Endothelial cell of umbilical vein (primary cell): ENCODE measurements at regions of chr13 and their contacts with region 1.

Region 1: GRCh38 chr13:41132512-41133152 is at the start of gene KBTBD6:
- DNase-seq: peak; percentile 99
- H3K4me3 ChIP-seq: peak within 1 kb of the TSS; percentile 53 to 93 (median 86)
- H3K27ac ChIP-seq: peak within 1 kb of the TSS; percentile 60
- H3K4me1 ChIP-seq: peaks cover 17% of the 10 kb centered on the region
- H3K27me3 ChIP-seq: no peaks in the 10 kb centered on the region
- CTCF ChIP-seq: no peak
- POLR2A ChIP-seq: peak; percentile 83
- total RNA-seq, gene KBTBD6: 6.4 and 6.6 TPM in 2 replicates

Region 2: GRCh38 chr13:40982772-40983171 is 149.9 kb before region 1 on chr13:
- CTCF ChIA-PET with region 1: no interaction called
- POLR2A ChIA-PET with region 1: no interaction called
- dilution Hi-C with region 1: no loop called
- intact Hi-C with region 1: loop called (anchors 10 kb)
- DNase-seq: peak; percentile 95
- H3K4me3 ChIP-seq: peak overlapping the region; percentile 51 to 97 (median 91)
- H3K27ac ChIP-seq: peak overlapping the region; percentile 99
- H3K4me1 ChIP-seq: peaks cover 69% of the 10 kb centered on the region
- H3K27me3 ChIP-seq: no peaks in the 10 kb centered on the region
- CTCF ChIP-seq: no peak
- POLR2A ChIP-seq: peak; percentile 69

Region 3: GRCh38 chr13:41193919-41194824 is 61.5 kb after region 1 on chr13 and contains the start of gene KBTBD7:
- CTCF ChIA-PET with region 1: interaction called, 5 read pairs
- POLR2A ChIA-PET with region 1: interaction called, 3 read pairs
- dilution Hi-C with region 1: no loop called
- intact Hi-C with region 1: loop called (anchors 1 kb)
- DNase-seq: peak; percentile 99
- H3K4me3 ChIP-seq: peak within 1 kb of the TSS; percentile 48 to 60 (median 53)
- H3K27ac ChIP-seq: peak within 1 kb of the TSS; percentile 78
- H3K4me1 ChIP-seq: peaks cover 4% of the 10 kb centered on the region
- H3K27me3 ChIP-seq: no peaks in the 10 kb centered on the region
- CTCF ChIP-seq: no peak
- POLR2A ChIP-seq: peak; percentile 80
- total RNA-seq, gene KBTBD7: 3.1 and 4.4 TPM in 2 replicates

Region 4: GRCh38 chr13:41222259-41222852 is 89.7 kb after region 1 on chr13:
- CTCF ChIA-PET with region 1: interaction called, 3 read pairs
- POLR2A ChIA-PET with region 1: no interaction called
- dilution Hi-C with region 1: no loop called
- intact Hi-C with region 1: loop called (anchors 2 kb)
- DNase-seq: peak; percentile 72
- H3K4me3 ChIP-seq: no peak overlapping the region
- H3K27ac ChIP-seq: no peak overlapping the region
- H3K4me1 ChIP-seq: no peaks in the 10 kb centered on the region
- H3K27me3 ChIP-seq: no peaks in the 10 kb centered on the region
- CTCF ChIP-seq: peak; percentile 58 to 67
- POLR2A ChIP-seq: no peak

Region 5: DNA sequence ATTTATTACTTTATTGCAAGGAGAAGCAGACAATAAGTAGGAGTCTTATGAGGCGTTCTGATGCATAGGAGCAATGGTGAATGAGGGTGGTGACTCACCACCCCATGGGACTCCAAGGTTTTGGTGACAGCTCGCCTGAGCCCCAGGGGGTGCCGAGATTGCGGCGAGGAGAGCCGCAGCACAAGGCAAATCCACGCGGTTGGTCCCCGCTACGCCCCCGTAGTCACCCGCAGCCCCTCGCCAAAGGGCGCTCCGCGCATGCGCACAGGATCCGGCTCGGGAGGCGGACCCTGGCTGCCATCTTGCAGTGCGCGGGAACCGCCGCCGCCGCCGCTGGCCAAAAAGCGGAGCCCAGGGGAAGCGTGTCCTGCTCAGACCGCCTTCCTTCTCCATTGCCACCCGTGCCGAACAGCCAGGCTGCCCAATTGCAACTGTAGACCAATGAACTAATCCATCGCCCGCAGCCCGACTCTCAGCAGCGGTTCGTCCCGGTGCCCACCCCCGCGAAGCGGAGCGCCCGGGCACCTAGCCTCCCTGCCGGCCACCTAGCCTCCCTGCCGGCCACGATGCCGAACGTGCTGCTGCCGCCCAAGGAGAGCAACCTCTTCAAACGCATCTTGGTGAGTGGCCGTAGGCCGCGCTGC is 178.5 kb after region 1 on chr13 and contains the start of gene NAA16:
- CTCF ChIA-PET with region 1: no interaction called
- POLR2A ChIA-PET with region 1: no interaction called
- dilution Hi-C with region 1: no loop called
- intact Hi-C with region 1: loop called (anchors 1 kb)
- DNase-seq: peak; percentile 93
- H3K4me3 ChIP-seq: peak within 1 kb of the TSS; percentile 92 to 95 (median 94)
- H3K27ac ChIP-seq: peak within 1 kb of the TSS; percentile 72
- H3K4me1 ChIP-seq: peaks cover 36% of the 10 kb centered on the region
- H3K27me3 ChIP-seq: no peaks in the 10 kb centered on the region
- CTCF ChIP-seq: no peak
- POLR2A ChIP-seq: peak; percentile 84
- total RNA-seq, gene NAA16: 24.1 and 26.1 TPM in 2 replicates